ENCODE measurements at regions of chr22 and their contacts with region 1.

Region 1: GRCh38 chr22:30968924-30969539 is at the start of gene TUG1:
- DNase-seq: peak; percentile 100

Region 2: DNA sequence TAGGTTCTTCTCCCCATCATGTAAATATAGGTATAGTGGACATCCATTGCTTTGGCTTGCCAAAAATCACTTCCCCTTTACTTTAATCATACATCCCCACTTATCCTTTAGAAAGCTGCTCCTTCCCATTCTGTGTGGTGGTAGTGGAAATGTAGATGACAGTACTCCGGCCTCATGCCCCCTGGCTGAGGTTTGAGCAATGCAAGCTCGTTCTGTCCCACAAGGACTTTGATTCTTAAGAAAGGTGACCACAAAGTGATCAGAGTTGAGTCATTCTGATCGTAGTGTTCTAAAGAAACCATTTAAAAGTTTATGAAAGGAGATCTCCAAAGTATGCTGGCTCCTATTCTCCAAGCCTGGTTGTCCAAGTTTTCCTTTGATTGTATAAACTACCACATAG is 10.9 kb after region 1 on chr22:
- CTCF ChIA-PET with region 1: no interaction called
- POLR2A ChIA-PET with region 1: interaction called, 29 read pairs
- DNase-seq: no peak

Region 3: DNA sequence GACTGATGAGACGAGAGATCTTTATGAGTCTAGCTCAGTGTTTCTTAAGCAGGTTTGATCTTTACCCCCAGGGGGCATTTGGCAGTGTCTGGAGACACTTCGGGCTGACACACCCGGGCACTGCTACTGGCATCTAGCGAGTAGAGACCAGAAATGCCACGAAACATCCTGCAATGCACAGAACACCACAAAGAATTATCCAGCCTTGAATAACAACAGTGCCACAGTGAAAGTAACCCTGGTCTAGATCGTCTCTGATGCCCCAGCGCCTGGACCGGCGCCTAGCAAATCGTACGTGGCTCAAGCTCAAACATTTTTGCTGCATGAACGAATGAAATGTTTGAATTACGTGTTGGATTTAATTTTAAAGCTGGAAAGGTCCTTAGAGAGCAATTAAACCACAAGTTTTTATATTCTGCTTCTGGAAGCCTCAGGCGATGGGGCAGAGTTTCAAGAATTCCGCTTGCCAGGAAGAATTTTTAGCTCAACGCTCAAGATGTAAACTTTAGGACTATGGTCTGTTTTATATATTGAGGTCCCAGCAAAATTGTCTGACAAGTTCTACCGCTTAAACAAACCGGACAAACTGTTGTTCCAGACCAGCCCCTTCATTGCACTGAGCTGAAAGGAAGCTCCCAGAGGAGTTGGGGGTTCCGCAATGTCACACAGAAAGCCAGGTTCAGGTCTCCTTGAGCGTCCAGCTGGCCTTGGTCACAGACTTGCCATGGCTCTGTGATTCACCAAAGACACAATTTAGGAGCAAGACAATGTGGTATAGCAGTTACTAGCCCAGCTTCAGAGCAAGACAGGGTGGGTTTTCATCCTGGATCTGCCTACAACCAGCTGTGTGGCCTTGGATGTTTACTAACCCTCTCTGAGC is 67.9 kb after region 1 on chr22:
- CTCF ChIA-PET with region 1: no interaction called
- POLR2A ChIA-PET with region 1: interaction called, 10 read pairs
- DNase-seq: no peak

Region 4: DNA sequence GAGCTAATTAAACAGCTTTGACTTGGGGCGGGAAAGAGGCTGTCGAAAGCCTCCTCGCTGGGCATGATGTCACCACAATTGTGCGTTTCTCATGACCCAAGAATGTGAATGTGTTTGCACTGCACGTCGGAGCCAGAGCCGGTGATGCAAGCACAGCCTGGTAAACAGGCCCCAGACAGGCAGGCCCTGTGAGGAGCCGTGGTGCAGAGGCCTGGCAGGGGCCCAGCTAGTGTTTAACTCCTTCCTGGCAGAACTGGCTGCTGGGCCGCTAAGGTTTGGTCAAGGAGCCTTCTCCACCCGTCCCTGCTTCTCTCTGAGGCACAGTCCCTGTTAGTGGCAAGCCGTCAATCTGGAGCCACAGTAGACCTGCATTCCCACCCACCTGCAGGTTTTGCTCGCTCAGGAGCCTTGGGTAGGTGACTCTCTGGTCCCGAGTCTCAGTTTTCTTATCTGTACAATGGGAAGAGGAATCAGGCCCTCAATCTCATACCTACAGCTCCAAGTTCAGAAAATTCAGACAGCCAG is 86.7 kb after region 1 on chr22:
- CTCF ChIA-PET with region 1: no interaction called
- POLR2A ChIA-PET with region 1: interaction called, 33 read pairs
- DNase-seq: peak; percentile 73

Region 5: DNA sequence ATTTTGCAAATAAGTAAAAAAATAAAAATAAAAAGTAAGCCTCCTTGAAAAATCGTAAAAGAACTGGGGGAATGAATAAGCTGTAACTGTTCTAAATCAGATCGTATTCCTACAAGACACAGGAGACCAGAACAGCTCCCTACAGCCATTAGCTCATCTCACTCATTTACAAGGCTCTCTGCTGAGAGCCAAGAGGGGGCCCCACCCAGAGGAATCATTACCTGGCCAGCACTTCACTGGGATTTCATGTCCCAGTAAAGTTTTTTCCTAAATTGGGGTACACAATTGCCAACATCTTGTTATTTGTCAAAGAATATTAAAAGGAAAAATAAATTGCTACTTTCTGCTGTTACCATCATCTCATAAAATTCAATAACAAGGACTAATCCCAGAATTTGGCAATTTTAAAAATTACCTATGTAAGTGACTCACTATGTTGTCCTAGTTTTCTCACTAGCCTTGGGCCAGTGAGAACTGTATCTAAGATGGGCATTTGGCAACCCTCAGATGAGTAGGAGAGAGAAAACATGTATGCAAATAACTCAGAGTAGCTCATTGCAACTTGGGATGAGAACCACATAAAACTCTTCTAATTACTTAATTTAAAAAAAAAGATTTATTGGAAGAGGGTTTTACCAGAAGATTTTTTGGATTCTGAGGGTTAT is 93.7 kb after region 1 on chr22:
- CTCF ChIA-PET with region 1: no interaction called
- POLR2A ChIA-PET with region 1: interaction called, 33 read pairs
- DNase-seq: no peak

Region 6: DNA sequence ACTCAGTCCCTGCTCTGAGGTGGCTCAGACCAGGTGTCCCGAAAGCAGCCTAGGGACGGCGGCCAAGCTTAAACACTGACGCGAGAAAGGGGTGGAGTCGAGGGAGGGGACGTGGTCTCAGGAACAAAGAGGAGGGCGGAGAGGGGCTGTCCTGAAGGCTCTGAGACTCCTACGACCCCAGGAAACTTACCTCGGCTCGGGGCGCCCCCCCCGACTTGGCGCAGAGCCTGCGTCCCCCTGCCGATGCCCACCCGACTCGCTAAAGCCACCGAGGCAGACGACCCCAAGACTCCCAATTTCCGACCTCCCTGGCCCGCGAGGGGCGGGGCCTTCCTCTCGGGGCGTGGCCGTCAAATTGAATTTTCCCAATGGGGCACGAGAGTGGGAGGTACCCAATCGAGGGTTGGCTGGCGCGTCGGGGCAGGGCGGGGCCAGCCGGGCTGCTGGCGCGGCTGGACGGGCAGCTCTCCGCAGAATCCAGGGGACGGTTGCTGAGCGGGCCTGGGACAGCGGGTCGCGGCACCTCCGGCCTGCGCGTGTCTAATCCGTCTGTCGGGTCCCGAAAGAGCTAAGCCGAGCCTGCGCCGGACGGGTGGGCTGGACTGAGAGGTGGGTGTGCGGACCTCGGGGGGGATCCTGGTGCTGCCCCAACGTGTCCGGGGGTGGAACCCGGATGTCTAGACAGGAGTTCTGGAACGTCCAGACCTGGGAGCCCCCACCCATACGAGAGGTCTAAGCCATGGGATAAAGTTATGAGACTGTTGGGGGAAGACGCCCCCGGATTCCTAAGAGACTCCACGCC is 112.0 kb after region 1 on chr22 and contains the start of gene SMTN:
- CTCF ChIA-PET with region 1: interaction called, 6 read pairs
- POLR2A ChIA-PET with region 1: interaction called, 47 read pairs
- DNase-seq: peak; percentile 99

Region 7: DNA sequence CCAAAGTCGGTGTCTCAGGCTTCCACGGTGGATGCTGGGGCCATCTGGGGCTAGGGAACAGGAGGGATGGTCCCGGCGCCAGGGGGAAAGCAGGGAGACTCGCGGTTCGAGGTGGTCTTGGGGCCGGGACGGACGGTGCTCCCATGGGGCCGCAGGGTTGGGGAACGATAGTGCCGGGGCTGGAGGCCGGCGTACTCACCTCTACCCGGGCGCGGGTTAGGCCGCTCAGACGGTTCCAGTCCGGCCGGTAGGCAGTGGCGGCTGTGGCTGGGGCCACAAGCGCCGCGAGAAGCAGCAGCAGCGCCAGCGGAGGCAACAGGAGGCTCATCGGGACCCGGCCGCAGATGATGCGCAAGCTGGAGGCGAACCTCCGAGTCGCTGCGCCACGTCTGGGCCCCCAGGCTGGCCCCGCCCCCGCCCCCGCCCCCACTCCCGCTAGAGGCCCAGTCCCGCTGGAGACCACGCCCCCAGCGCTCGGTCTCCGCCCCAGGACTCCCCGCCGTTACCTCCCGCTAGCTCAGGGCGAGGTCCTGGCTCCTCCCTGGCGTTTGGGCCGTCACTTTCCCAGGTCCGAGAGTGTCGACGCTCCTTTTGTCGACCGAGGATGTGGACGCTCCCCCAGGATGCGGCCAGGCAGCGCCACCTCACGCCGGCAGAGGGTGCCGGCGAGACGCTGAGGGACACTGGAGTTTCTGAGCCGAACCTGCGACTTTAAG is 138.3 kb after region 1 on chr22 and contains the start of gene SELENOM:
- CTCF ChIA-PET with region 1: interaction called, 3 read pairs
- POLR2A ChIA-PET with region 1: interaction called, 14 read pairs
- DNase-seq: peak; percentile 99